AG04450 (cell line): ENCODE measurements at regions of chr9 and their contacts with region 1.

Region 1: GRCh38 chr9:35538361-35539234 is 48.7 kb downstream of the RUSC2 start:
- DNase-seq: no peak
- H3K4me3 ChIP-seq: peak overlapping the region; percentile 77
- H3K27ac ChIP-seq: peak overlapping the region; percentile 95
- H3K27me3 ChIP-seq: no peaks in the 10 kb centered on the region
- CTCF ChIP-seq: no peak

Region 2: DNA sequence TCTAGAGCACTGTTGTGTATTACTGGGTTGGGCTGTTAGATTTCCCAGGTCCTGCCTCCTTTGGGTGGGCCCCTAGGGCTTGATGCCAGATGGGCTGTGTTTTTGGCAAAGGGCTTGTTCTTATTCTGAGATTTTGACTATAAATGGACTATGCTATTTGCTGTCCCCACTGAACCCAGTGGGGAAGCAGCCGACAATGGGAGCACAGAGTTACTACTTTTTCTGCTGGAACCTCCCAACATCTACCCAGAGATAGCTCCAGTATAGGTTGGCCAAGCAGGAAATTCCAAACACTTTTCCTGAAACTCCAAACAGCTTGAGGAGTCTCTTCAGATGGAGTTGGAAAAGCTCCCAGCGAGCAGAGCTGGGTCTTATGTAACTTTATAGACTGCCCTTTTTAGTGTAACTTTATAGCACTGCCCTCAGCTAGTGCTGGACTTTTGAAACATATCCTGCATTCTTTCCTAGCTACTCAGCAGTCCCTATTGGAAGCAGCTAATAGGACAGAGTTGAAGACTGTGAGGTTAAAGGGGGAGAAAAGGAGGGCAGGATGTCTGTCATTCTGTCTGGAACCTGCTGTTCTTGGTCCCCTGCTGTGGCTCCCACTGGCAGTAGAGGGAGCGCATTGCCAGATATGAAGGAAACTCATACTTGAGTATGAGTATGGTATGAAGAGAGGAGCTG is 27.7 kb before region 1 on chr9:
- CTCF ChIA-PET with region 1: no interaction called
- POLR2A ChIA-PET with region 1: interaction called, 14 read pairs
- DNase-seq: peak; percentile 91
- H3K4me3 ChIP-seq: peak overlapping the region; percentile 18
- H3K27ac ChIP-seq: peak overlapping the region; percentile 80
- H3K27me3 ChIP-seq: no peaks in the 10 kb centered on the region
- CTCF ChIP-seq: peak; percentile 22; the same call in 1 of the 2 replicates

Region 3: GRCh38 chr9:35518226-35518821 is 20.3 kb before region 1 on chr9:
- CTCF ChIA-PET with region 1: interaction called, 5 read pairs
- POLR2A ChIA-PET with region 1: interaction called, 24 read pairs
- DNase-seq: peak; percentile 88
- H3K4me3 ChIP-seq: no peak overlapping the region
- H3K27ac ChIP-seq: peak overlapping the region; percentile 92
- H3K27me3 ChIP-seq: no peaks in the 10 kb centered on the region
- CTCF ChIP-seq: no peak